Right cardiac atrium (tissue), 5 donors: ENCODE measurements at regions of chr16 and their contacts with region 1.

Region 1: GRCh38 chr16:53054670-53055485 is at the start of gene CHD9:
- DNase-seq: peak; percentile 86 to 96 (median 94)
- ATAC-seq: peak; percentile 89 to 91
- H3K4me3 ChIP-seq: peak within 1 kb of the TSS; percentile 75
- H3K27ac ChIP-seq: peak within 1 kb of the TSS; percentile 94
- H3K4me1 ChIP-seq: peaks cover 4% of the 10 kb centered on the region
- H3K27me3 ChIP-seq: no peaks in the 10 kb centered on the region
- total RNA-seq, gene CHD9: 49.4 to 73.5 (median 57.4) TPM

Region 2: GRCh38 chr16:53091466-53092211 is 36.8 kb after region 1 on chr16:
- intact Hi-C with region 1: loop called in 3 of 4 experiments (anchors 5 kb)
- DNase-seq: peak; percentile 82 to 89 (median 89)
- ATAC-seq: peak; percentile 52 to 64
- H3K4me3 ChIP-seq: no peak overlapping the region
- H3K27ac ChIP-seq: peak overlapping the region; percentile 73
- H3K4me1 ChIP-seq: peaks cover 34% of the 10 kb centered on the region
- H3K27me3 ChIP-seq: no peaks in the 10 kb centered on the region

Region 3: GRCh38 chr16:53130159-53131049 is 75.5 kb after region 1 on chr16:
- intact Hi-C with region 1: loop called in 2 of 4 experiments (anchors 1 to 10 kb)
- DNase-seq: peak; percentile 99
- ATAC-seq: peak; percentile 96
- H3K4me3 ChIP-seq: peak overlapping the region; percentile 98
- H3K27ac ChIP-seq: peak overlapping the region; percentile 94
- H3K4me1 ChIP-seq: peaks cover 3% of the 10 kb centered on the region
- H3K27me3 ChIP-seq: no peaks in the 10 kb centered on the region

Region 4: DNA sequence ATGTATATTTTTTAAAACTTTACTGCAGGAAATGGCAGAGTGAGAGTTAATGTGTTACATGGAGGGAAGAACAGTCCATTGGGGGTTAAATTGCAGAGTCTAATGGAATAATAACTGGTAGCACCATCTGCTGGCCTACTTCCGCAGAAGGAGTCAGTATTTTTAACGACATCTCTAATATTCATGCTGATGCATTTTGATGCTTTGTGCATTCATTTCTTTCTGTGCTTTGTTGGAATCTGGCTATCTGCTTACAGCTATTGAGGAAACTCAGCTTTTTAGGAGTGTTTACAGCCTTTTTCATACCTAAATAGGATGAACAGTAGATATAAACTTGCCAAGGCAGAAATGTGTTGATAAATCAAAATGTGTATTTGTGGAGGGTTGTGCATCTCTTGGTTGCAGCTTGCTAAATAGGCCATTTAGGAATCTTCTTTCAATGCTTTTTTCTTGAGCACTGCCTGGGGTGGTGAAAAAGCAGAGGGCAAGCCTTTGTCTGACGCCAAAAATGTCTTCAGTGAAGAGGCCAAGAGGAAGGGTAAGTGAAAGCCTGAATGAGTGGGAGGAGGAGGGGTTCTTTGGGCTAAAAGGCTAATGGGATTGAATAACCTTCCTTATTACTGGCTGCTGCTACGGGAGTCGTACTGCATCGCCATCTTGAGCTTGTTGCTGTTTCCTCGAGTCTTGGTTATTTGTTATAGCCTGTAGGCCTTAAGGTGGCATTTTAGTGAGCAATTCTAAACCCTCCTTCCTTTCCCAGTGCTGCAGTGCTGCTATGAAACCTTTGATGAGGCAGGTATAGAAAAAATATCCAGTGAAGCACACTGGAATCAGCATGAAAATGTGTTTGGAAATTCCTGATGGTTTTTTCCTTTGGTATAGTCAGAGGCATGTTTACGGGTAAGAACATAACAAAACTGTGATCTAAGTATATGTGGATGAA is 153.2 kb after region 1 on chr16:
- intact Hi-C with region 1: loop called (anchors 5 to 10 kb)
- DNase-seq: peak in 2 of 3 donors; percentile 35 to 54
- ATAC-seq: peak; percentile 95 to 96
- H3K4me3 ChIP-seq: peak overlapping the region; percentile 92
- H3K27ac ChIP-seq: peak overlapping the region; percentile 100
- H3K4me1 ChIP-seq: no peaks in the 10 kb centered on the region
- H3K27me3 ChIP-seq: no peaks in the 10 kb centered on the region

Region 5: GRCh38 chr16:53282975-53283946 is 228.4 kb after region 1 on chr16:
- intact Hi-C with region 1: loop called in 2 of 4 experiments (anchors 10 kb)
- DNase-seq: no peak
- ATAC-seq: peak in 1 of 2 donors; percentile 55
- H3K4me3 ChIP-seq: no peak overlapping the region
- H3K27ac ChIP-seq: no peak overlapping the region
- H3K4me1 ChIP-seq: no peaks in the 10 kb centered on the region
- H3K27me3 ChIP-seq: no peaks in the 10 kb centered on the region